Ovary (tissue), 10 donors: ENCODE measurements at regions of chr1 and their contacts with region 1.

Region 1: DNA sequence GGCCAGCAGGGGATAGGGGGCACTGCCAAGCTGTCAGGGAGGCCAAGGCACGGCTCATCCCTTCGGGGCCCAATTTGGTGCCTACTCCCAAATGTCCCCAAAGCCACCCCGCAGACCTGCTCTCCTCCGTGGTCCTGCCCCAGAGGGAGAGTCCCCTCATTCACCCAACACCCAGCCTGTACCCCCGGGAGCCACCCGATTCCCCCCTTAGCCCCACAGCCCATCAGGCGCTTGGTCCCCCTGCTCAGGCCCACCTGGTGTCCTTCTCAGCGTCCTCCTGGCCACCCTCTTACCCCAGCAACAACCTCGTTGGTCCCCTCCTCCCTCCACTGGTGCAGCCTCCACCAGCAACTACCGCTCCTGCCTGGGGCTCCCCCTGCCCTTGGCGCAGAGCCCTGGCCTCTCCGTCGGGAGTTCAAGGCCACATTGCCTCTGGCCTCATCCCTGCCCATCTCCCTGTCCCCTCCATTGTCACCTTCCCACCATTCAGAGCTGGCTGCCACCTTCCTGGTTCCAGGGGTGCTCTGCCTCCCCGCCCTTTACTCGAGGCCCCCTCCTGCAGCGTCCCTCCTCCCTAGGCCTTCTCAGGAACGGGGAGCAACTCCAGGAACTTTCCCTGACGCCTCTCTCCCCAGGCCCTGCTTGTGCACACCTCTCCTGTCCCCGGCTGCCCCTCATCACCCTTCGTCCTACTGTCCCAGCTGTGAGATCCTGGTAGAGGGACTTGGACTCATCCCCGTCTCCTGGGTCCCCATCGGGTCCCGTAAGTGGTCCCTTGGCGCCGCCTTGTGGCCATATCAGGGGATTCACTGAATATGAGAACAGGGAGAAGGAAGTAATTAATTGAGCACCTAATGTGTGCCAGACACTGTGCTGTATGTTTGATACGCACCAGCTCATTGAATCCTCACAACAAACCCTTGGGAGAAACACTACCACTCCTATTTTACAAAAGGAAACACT is 73.9 kb downstream of the RAP1GAP start:
- DNase-seq: peak; percentile 26 to 63 (median 54)
- H3K4me3 ChIP-seq: no peak overlapping the region
- H3K27ac ChIP-seq: no peak overlapping the region
- H3K4me1 ChIP-seq: no peaks in the 10 kb centered on the region
- H3K27me3 ChIP-seq: no peaks in the 10 kb centered on the region
- CTCF ChIP-seq: peak in 1 of 3 donors; percentile 10
- EP300 ChIP-seq: no peak
- POLR2A ChIP-seq: no peak

Region 2: DNA sequence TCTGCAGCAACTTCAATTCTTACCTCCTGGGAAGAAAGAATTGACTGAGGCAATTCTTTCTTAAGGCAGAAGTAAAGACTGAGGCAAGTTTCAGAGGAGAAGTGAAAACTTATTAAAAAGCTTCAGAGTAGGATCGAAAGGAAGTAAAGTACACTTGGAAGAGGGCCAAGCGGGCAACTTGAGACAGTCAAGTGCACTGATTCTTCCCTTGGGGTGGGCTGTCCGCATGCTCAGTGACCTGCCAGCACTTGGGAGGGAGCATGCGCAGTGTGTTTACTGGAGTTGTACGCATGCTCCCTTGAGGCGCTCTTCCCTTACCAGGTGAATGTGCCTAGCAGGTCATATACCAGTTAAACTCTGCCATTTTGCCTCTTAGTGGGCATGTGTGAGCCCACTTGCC is 210.6 kb before region 1 on chr1:
- intact Hi-C with region 1: loop called in 1 of 4 experiments (anchors 10 kb)
- DNase-seq: no peak
- H3K4me3 ChIP-seq: no peak overlapping the region
- H3K27ac ChIP-seq: no peak overlapping the region
- H3K4me1 ChIP-seq: no peaks in the 10 kb centered on the region
- H3K27me3 ChIP-seq: no peaks in the 10 kb centered on the region
- CTCF ChIP-seq: no peak
- EP300 ChIP-seq: no peak
- POLR2A ChIP-seq: no peak